CD8-positive, alpha-beta T cell (primary cell): ENCODE measurements at regions of chr3 and their contacts with region 1.

Region 1: GRCh38 chr3:50568947-50569749 is at the start of gene HEMK1:
- DNase-seq: peak; percentile 83 to 96 (median 94)
- ATAC-seq: peak; percentile 70
- H3K4me3 ChIP-seq: peak within 1 kb of the TSS; percentile 89 to 94
- H3K4me3 Mint-ChIP-seq: peak within 1 kb of the TSS; percentile 94
- H3K27ac ChIP-seq: peak within 1 kb of the TSS; percentile 83 to 89
- H3K27ac Mint-ChIP-seq: peak within 1 kb of the TSS; percentile 97
- H3K4me1 ChIP-seq: peaks cover 68% of the 10 kb centered on the region
- H3K4me1 Mint-ChIP-seq: peaks cover 67% of the 10 kb centered on the region
- H3K27me3 ChIP-seq: no peaks in the 10 kb centered on the region
- H3K27me3 Mint-ChIP-seq: no peaks in the 10 kb centered on the region
- CTCF ChIP-seq: no peak
- total RNA-seq, gene HEMK1: 11.1 to 12.5 TPM

Region 2: GRCh38 chr3:50028336-50028735 is 540.8 kb before region 1 on chr3:
- CTCF ChIA-PET with region 1: no interaction called
- POLR2A ChIA-PET with region 1: no interaction called
- intact Hi-C with region 1: no loop called
- DNase-seq: no peak
- ATAC-seq: no peak
- H3K4me3 ChIP-seq: no peak overlapping the region
- H3K4me3 Mint-ChIP-seq: no peak overlapping the region
- H3K27ac ChIP-seq: no peak overlapping the region
- H3K27ac Mint-ChIP-seq: no peak overlapping the region
- H3K4me1 ChIP-seq: no peaks in the 10 kb centered on the region
- H3K4me1 Mint-ChIP-seq: peaks cover 5% of the 10 kb centered on the region
- H3K27me3 ChIP-seq: no peaks in the 10 kb centered on the region
- H3K27me3 Mint-ChIP-seq: no peaks in the 10 kb centered on the region
- CTCF ChIP-seq: no peak

Region 3: DNA sequence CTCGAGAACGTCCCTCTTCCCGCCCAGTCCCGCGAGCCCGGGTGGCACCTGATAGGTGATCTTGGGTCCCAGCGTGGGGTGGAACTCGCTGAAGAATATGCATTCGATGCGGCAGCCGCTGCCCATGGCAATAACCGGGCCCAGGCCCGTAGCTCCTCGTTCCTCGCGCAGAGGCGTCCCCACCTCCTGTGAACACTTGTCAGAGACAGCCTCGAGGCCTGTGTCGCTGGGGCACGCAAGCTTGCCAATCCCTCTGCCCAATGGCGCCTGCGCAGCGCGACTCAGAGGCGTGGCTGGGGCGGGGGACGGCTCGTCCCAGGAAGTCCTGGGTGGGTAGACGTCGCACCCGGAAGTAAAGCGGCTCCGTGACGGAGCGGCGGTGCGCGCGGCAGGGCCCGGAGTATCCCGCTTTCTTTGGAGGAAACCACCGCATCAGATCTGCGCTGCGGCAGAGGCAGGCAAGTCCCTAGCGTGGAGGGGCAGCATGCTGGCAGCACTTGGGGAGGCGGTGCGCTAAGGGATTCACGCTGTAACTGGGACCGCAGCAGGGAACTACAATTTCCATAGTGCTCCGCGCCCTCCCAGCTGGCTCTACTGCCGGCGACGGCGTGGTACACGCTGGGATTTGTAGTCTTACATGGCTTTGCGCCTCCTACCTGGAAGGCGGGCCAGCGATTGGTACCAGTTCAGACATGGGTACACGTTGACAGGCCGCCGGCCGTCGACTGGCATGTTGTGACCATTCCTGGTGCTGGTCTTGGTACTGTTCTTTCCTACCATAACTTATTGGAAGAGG is 218.4 kb before region 1 on chr3 and contains the starts of genes CYB561D2 and NPRL2:
- CTCF ChIA-PET with region 1: no interaction called
- POLR2A ChIA-PET with region 1: interaction called, 3 read pairs
- intact Hi-C with region 1: loop called in 1 of 2 experiments (anchors 5 kb)
- DNase-seq: peak; percentile 98 to 100 (median 99)
- ATAC-seq: peak; percentile 88
- H3K4me3 ChIP-seq: peak within 1 kb of the TSS; percentile 79
- H3K4me3 Mint-ChIP-seq: peak within 1 kb of the TSS; percentile 98
- H3K27ac ChIP-seq: peak within 1 kb of the TSS; percentile 83 to 94
- H3K27ac Mint-ChIP-seq: peak within 1 kb of the TSS; percentile 99
- H3K4me1 ChIP-seq: peaks cover 54% of the 10 kb centered on the region
- H3K4me1 Mint-ChIP-seq: peaks cover 65% of the 10 kb centered on the region
- H3K27me3 ChIP-seq: no peaks in the 10 kb centered on the region
- H3K27me3 Mint-ChIP-seq: no peaks in the 10 kb centered on the region
- CTCF ChIP-seq: no peak
- total RNA-seq, gene CYB561D2: 24.2 to 24.3 TPM
- total RNA-seq, gene NPRL2: 28.7 to 30.9 TPM

Region 4: GRCh38 chr3:50486219-50486888 is 82.8 kb before region 1 on chr3:
- CTCF ChIA-PET with region 1: no interaction called
- POLR2A ChIA-PET with region 1: no interaction called
- intact Hi-C with region 1: no loop called
- DNase-seq: no peak
- ATAC-seq: no peak
- H3K4me3 ChIP-seq: no peak overlapping the region
- H3K4me3 Mint-ChIP-seq: no peak overlapping the region
- H3K27ac ChIP-seq: no peak overlapping the region
- H3K27ac Mint-ChIP-seq: no peak overlapping the region
- H3K4me1 ChIP-seq: peaks cover 20% of the 10 kb centered on the region
- H3K4me1 Mint-ChIP-seq: peaks cover 21% of the 10 kb centered on the region
- H3K27me3 ChIP-seq: no peaks in the 10 kb centered on the region
- H3K27me3 Mint-ChIP-seq: no peaks in the 10 kb centered on the region
- CTCF ChIP-seq: no peak

Region 5: GRCh38 chr3:50542177-50543034 is 26.7 kb before region 1 on chr3:
- CTCF ChIA-PET with region 1: interaction called, 11 read pairs
- POLR2A ChIA-PET with region 1: no interaction called
- intact Hi-C with region 1: no loop called
- DNase-seq: peak; percentile 38 to 76 (median 63)
- ATAC-seq: peak; percentile 84
- H3K4me3 ChIP-seq: no peak overlapping the region
- H3K4me3 Mint-ChIP-seq: no peak overlapping the region
- H3K27ac ChIP-seq: no peak overlapping the region
- H3K27ac Mint-ChIP-seq: no peak overlapping the region
- H3K4me1 ChIP-seq: peaks cover 3% of the 10 kb centered on the region
- H3K4me1 Mint-ChIP-seq: no peaks in the 10 kb centered on the region
- H3K27me3 ChIP-seq: no peaks in the 10 kb centered on the region
- H3K27me3 Mint-ChIP-seq: peaks cover 10% of the 10 kb centered on the region
- CTCF ChIP-seq: peak; percentile 78

Region 6: GRCh38 chr3:50652709-50653108 is 83.6 kb after region 1 on chr3:
- CTCF ChIA-PET with region 1: interaction called, 43 read pairs
- POLR2A ChIA-PET with region 1: interaction called, 4 read pairs
- intact Hi-C with region 1: loop called (anchors 1 to 2 kb)
- DNase-seq: peak in 8 of 9 experiments; percentile 29 to 72 (median 54)
- ATAC-seq: peak; percentile 61
- H3K4me3 ChIP-seq: no peak overlapping the region
- H3K4me3 Mint-ChIP-seq: no peak overlapping the region
- H3K27ac ChIP-seq: no peak overlapping the region
- H3K27ac Mint-ChIP-seq: peak overlapping the region; percentile 52
- H3K4me1 ChIP-seq: no peaks in the 10 kb centered on the region
- H3K4me1 Mint-ChIP-seq: peaks cover 1% of the 10 kb centered on the region
- H3K27me3 ChIP-seq: no peaks in the 10 kb centered on the region
- H3K27me3 Mint-ChIP-seq: no peaks in the 10 kb centered on the region
- CTCF ChIP-seq: peak; percentile 42

Region 7: GRCh38 chr3:51371943-51372557 is 802.9 kb after region 1 on chr3:
- CTCF ChIA-PET with region 1: interaction called, 3 read pairs
- POLR2A ChIA-PET with region 1: no interaction called
- intact Hi-C with region 1: loop called in 1 of 2 experiments (anchors 5 kb)
- DNase-seq: peak; percentile 23 to 74 (median 51)
- ATAC-seq: peak; percentile 36
- H3K4me3 ChIP-seq: no peak overlapping the region
- H3K4me3 Mint-ChIP-seq: no peak overlapping the region
- H3K27ac ChIP-seq: no peak overlapping the region
- H3K27ac Mint-ChIP-seq: no peak overlapping the region
- H3K4me1 ChIP-seq: no peaks in the 10 kb centered on the region
- H3K4me1 Mint-ChIP-seq: peaks cover 2% of the 10 kb centered on the region
- H3K27me3 ChIP-seq: no peaks in the 10 kb centered on the region
- H3K27me3 Mint-ChIP-seq: peaks cover 2% of the 10 kb centered on the region
- CTCF ChIP-seq: peak; percentile 46

Region 8: DNA sequence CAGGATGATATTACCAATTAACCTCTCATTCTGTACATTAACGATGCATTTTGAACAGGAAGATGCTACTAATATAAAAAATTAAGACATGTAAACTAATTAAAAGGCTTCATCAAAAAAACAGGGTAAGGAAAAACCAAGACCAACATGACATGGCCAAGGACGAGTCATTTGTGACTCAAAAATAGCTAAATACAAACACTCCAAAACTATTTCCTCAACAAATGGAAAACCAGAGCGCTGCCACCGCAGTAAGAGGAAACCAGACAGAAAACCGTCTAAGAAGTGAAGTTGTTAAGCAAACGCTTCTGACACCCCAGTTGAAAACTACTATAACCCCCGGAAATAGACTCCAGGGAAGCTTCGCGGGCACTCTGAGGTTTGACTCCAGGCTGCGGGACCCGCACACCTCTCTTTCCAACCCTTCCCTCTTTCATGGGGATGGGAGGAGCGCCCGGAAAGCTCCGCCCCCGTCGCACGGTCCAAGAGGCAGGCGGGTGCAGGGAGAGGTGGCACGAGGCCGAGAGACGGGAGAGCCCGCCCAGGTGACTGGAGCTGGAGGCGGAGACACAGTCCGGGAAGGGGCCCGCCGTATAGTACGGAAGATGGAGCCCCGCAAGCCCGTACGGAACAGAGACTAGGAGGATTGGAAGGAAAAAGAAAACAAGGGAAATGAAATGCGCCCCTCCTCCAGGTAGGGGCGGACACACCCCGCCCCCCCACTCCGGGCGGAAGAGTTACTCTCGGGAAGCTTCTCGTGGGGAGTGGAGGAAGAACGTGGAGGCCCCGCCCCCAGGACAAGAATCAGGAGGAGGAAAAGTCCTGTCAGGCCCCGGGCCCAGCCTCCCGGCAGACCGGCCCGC is 930.0 kb after region 1 on chr3:
- CTCF ChIA-PET with region 1: no interaction called
- POLR2A ChIA-PET with region 1: interaction called, 4 read pairs
- intact Hi-C with region 1: loop called (anchors 1 to 2 kb)
- DNase-seq: peak; percentile 44 to 88 (median 77)
- ATAC-seq: peak; percentile 46
- H3K4me3 ChIP-seq: peak overlapping the region; percentile 86 to 87
- H3K4me3 Mint-ChIP-seq: peak overlapping the region; percentile 92
- H3K27ac ChIP-seq: peak overlapping the region; percentile 80 to 93
- H3K27ac Mint-ChIP-seq: peak overlapping the region; percentile 99
- H3K4me1 ChIP-seq: peaks cover 16% of the 10 kb centered on the region
- H3K4me1 Mint-ChIP-seq: peaks cover 24% of the 10 kb centered on the region
- H3K27me3 ChIP-seq: no peaks in the 10 kb centered on the region
- H3K27me3 Mint-ChIP-seq: no peaks in the 10 kb centered on the region
- CTCF ChIP-seq: no peak

Region 9: GRCh38 chr3:52154117-52155094 is 1585.3 kb after region 1 on chr3 and contains the start of gene POC1A:
- CTCF ChIA-PET with region 1: no interaction called
- POLR2A ChIA-PET with region 1: no interaction called
- intact Hi-C with region 1: loop called in 1 of 2 experiments (anchors 5 kb)
- DNase-seq: peak; percentile 61 to 91 (median 83)
- ATAC-seq: peak; percentile 85
- H3K4me3 ChIP-seq: peak within 1 kb of the TSS; percentile 98 to 99
- H3K4me3 Mint-ChIP-seq: peak within 1 kb of the TSS; percentile 96
- H3K27ac ChIP-seq: peak within 1 kb of the TSS; percentile 71 to 91
- H3K27ac Mint-ChIP-seq: peak within 1 kb of the TSS; percentile 96
- H3K4me1 ChIP-seq: peaks cover 7% of the 10 kb centered on the region
- H3K4me1 Mint-ChIP-seq: peaks cover 10% of the 10 kb centered on the region
- H3K27me3 ChIP-seq: no peaks in the 10 kb centered on the region
- H3K27me3 Mint-ChIP-seq: no peaks in the 10 kb centered on the region
- CTCF ChIP-seq: no peak
- total RNA-seq, gene POC1A: 0.24 to 0.42 TPM